Activated naive CD4-positive, alpha-beta T cell treated with anti-CD3 and anti-CD28 coated beads for 36 hours (primary cell): ENCODE measurements at regions of chr21 and their contacts with region 1.

Region 1: DNA sequence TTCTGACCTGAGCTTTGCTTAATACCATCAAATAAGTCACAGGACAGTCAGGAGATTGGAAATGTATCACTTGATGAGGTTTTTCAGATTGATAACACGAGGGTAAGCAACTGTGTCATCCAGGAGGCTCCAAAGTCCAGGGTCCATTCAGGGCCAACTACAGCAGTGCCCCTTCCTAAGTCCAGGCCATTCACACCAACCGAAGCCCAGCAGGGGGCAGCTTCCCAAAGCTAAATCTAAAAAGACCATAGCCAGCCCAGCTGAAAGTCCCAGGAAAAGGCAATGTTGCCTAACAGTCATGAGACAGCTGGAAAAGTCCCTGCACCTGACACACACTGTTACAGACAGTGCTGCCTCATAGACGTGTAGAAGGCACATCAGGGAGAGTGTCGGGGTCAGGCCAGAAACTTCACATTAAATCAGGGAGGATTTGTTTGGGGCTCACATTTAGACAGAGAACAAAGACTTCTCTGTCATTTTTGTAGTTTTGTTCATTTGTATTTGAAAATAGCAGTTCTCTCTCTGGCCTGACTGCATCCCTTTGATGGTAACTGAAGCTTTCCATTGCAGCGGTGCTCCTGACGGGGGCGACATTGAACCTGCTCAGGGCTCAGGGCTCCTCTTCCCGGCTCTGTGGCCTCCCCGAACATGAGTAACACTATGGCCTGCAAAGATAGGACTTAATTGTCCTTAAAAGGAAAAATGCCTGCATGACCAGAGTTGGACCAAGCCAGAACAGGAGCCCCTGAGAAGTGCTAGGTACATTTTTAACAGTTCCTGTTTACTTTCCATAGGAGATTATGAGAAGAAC is 200.4 kb downstream of the NRIP1 start:
- DNase-seq: peak; percentile 74
- H3K4me3 Mint-ChIP-seq: no peak overlapping the region
- H3K27ac Mint-ChIP-seq: no peak overlapping the region
- H3K4me1 Mint-ChIP-seq: peaks cover 10% of the 10 kb centered on the region
- H3K27me3 Mint-ChIP-seq: peaks cover 2% of the 10 kb centered on the region

Region 2: GRCh38 chr21:14403681-14404318 is 460.6 kb before region 1 on chr21:
- CTCF ChIA-PET with region 1: no interaction called
- intact Hi-C with region 1: loop called (anchors 1 kb)
- DNase-seq: peak; percentile 9
- H3K4me3 Mint-ChIP-seq: no peak overlapping the region
- H3K27ac Mint-ChIP-seq: no peak overlapping the region
- H3K4me1 Mint-ChIP-seq: no peaks in the 10 kb centered on the region
- H3K27me3 Mint-ChIP-seq: no peaks in the 10 kb centered on the region

Region 3: GRCh38 chr21:14736162-14736561 is 128.3 kb before region 1 on chr21:
- CTCF ChIA-PET with region 1: no interaction called
- intact Hi-C with region 1: no loop called
- DNase-seq: peak; percentile 22
- H3K4me3 Mint-ChIP-seq: no peak overlapping the region
- H3K27ac Mint-ChIP-seq: no peak overlapping the region
- H3K4me1 Mint-ChIP-seq: peaks cover 31% of the 10 kb centered on the region
- H3K27me3 Mint-ChIP-seq: no peaks in the 10 kb centered on the region

Region 4: DNA sequence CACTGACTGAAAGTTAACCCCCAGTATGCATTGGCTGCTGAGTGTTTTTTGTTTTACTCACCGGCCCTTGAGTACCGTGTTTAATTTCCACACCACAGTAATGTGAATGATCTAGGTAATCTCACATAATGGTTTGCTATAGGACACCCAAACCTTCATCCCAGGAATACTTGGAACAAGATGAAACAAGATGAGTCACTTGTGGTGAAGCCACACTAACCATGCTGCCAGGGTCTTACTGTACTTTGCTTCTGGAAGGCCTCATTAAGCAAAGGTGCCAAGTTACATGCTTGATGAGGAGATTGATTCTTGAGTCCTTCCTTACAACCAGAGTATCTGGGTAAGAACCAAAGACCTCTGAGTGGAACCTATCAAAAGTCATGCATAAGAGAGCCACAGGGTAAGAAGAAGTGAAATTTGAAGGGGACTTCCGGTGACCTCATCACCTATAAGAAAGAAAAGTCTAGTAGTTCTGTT is 37.1 kb after region 1 on chr21:
- CTCF ChIA-PET with region 1: no interaction called
- intact Hi-C with region 1: loop called (anchors 2 kb)
- DNase-seq: peak; percentile 16
- H3K4me3 Mint-ChIP-seq: no peak overlapping the region
- H3K27ac Mint-ChIP-seq: no peak overlapping the region
- H3K4me1 Mint-ChIP-seq: peaks cover 16% of the 10 kb centered on the region
- H3K27me3 Mint-ChIP-seq: no peaks in the 10 kb centered on the region

Region 5: DNA sequence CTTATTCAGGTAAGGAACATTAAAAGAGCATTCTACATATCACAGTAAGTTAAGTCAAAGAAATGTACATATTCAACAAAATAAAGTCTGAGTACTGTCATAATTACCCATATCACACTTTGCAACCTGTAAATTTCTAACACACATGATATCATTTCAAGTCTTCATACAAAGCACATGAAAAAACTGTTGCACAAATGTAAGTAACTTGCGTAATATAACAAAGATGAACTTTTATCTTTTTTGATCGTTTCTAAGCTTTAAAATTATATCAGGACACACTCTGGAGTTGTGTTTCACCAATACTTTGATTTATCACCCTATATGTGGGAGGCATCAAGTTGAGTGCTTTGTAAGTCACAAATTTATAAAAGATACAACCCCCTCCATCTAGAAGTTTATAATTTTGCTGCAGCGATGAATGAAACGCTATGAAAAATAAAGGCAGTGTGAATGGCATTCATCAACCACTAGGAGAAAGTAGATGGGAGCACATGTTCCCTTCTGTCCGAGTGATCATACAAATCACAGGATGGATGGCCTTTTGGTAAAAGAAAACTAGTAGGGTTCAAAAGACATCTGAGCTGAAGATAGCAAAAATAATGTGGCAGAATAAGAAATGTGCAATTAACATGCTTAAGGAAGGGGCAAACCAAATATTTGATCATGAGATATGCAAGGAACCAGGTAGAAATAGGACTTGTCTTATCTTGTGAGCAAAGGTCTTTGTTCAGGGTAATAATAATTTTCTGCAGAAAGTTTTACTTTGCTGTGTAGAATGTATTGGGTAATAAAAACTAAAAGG is 172.9 kb after region 1 on chr21:
- CTCF ChIA-PET with region 1: no interaction called
- intact Hi-C with region 1: no loop called
- DNase-seq: no peak
- H3K4me3 Mint-ChIP-seq: no peak overlapping the region
- H3K27ac Mint-ChIP-seq: no peak overlapping the region
- H3K4me1 Mint-ChIP-seq: peaks cover 40% of the 10 kb centered on the region
- H3K27me3 Mint-ChIP-seq: no peaks in the 10 kb centered on the region

Region 6: GRCh38 chr21:15552914-15553494 is 688.6 kb after region 1 on chr21:
- CTCF ChIA-PET with region 1: interaction called, 6 read pairs
- intact Hi-C with region 1: loop called (anchors 1 kb)
- DNase-seq: no peak
- H3K4me3 Mint-ChIP-seq: no peak overlapping the region
- H3K27ac Mint-ChIP-seq: no peak overlapping the region
- H3K4me1 Mint-ChIP-seq: peaks cover 15% of the 10 kb centered on the region
- H3K27me3 Mint-ChIP-seq: no peaks in the 10 kb centered on the region

Region 7: GRCh38 chr21:15826147-15826780 is 961.8 kb after region 1 on chr21:
- CTCF ChIA-PET with region 1: no interaction called
- intact Hi-C with region 1: loop called (anchors 10 kb)
- DNase-seq: peak; percentile 53
- H3K4me3 Mint-ChIP-seq: no peak overlapping the region
- H3K27ac Mint-ChIP-seq: no peak overlapping the region
- H3K4me1 Mint-ChIP-seq: peaks cover 28% of the 10 kb centered on the region
- H3K27me3 Mint-ChIP-seq: no peaks in the 10 kb centered on the region